Transverse colon (tissue), 4 donors: ENCODE measurements at regions of chr6 and their contacts with region 1.

Region 1: GRCh38 chr6:142679907-142680700 is 264.9 kb downstream of the HIVEP2 start:
- DNase-seq: no peak
- H3K4me3 ChIP-seq: no peak overlapping the region
- H3K27ac ChIP-seq: no peak overlapping the region
- H3K4me1 ChIP-seq: peaks cover 0 to 5% (median 0%) of the 10 kb centered on the region in 4 donors
- H3K27me3 ChIP-seq: no peaks in the 10 kb centered on the region
- CTCF ChIP-seq: no peak
- EP300 ChIP-seq: no peak
- POLR2A ChIP-seq: no peak

Region 2: DNA sequence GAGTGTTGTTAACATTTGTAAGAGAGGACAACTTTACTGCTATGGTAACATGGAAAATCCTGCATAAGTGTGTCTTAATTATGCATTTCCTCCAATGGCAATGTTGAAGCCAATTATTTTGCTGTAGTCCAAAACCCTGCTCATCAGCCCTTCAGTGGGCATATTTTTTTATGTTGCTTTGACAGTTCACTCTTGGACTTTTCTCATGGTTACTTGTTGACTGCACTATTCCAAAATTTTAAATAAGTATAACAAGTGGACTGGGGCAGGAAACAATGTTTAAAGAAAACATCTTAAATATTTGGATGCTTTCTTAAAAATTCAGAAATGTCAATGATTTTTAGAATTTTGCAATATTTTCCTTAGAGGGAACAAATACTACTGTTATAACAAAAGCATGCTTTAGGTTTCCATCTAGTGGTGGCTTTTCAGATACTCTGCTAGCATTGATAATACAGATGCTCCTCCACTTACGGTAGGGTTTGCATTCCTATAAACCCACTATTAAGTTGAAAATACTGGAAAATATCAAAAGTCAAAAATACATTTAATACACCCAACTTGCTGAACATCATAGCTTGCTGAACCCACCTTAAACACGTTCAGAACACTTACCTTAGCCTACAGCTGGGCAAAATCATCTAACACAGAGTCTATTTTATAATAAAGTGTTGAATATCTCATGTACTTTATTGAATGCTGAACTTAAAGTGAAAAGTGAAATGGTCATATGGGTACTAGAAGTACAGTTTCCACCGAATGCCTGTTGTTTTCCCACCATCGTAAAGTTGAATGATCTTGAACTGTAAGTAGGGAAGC is 291.9 kb before region 1 on chr6:
- in situ Hi-C with region 1: no loop called
- intact Hi-C with region 1: no loop called
- DNase-seq: no peak
- H3K4me3 ChIP-seq: no peak overlapping the region
- H3K27ac ChIP-seq: no peak overlapping the region
- H3K4me1 ChIP-seq: no peaks in the 10 kb centered on the region
- H3K27me3 ChIP-seq: no peaks in the 10 kb centered on the region
- CTCF ChIP-seq: peak; percentile 39 to 53 (median 48)
- EP300 ChIP-seq: no peak
- POLR2A ChIP-seq: no peak

Region 3: DNA sequence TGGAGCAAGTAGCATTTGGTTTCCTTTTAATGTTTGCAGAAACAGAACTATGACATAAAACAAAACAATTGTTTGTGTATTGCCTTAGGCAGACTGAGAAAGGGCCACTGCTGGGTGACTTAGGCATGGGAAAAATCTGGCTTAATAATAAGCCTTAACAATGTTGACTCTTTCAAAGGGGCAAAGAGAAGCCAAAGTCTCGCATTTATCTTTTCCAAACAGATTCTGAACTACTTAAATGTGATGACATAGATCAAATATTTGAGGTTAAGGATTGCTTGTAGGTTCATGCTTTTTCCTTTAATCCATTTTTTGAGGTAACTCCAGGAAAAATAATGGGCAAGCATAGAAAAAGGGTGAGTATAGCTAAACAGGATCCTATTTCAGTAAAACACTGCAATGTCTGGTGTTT is 730.8 kb after region 1 on chr6:
- in situ Hi-C with region 1: loop called (anchors 10 to 25 kb)
- intact Hi-C with region 1: no loop called
- DNase-seq: no peak
- H3K4me3 ChIP-seq: no peak overlapping the region
- H3K27ac ChIP-seq: no peak overlapping the region
- H3K4me1 ChIP-seq: no peaks in the 10 kb centered on the region
- H3K27me3 ChIP-seq: no peaks in the 10 kb centered on the region
- CTCF ChIP-seq: no peak
- EP300 ChIP-seq: no peak
- POLR2A ChIP-seq: no peak